GM18951 (cell line): ENCODE measurements at regions of chr12 and their contacts with region 1.

Region 1: GRCh38 chr12:9636851-9637206 is 29.1 kb upstream of the KLRB1 start:
- POLR2A ChIP-seq: no peak

Region 2: DNA sequence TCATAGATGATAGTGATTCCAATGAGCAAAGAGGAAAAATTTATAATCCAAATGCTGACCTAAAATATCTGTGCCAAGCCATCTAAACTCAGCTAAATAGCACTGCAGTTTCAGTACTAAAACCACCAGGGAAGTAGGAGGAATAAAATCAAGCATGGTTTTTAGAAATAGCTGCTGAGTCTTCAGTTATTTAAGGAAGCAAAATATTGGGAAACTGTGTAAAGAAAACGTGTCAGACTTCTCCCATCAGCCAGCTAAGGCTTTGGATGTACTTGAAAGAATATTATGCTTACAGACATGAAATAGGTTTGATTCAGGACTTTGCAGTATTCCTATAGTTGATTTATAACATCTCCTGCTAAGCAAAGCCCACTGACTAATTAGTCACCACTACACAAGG is 57.4 kb after region 1 on chr12:
- in situ Hi-C with region 1: loop called (anchors 5 kb)
- POLR2A ChIP-seq: no peak